MCF 10A (cell line): ENCODE measurements at regions of chr5 and their contacts with region 1.

Region 1: DNA sequence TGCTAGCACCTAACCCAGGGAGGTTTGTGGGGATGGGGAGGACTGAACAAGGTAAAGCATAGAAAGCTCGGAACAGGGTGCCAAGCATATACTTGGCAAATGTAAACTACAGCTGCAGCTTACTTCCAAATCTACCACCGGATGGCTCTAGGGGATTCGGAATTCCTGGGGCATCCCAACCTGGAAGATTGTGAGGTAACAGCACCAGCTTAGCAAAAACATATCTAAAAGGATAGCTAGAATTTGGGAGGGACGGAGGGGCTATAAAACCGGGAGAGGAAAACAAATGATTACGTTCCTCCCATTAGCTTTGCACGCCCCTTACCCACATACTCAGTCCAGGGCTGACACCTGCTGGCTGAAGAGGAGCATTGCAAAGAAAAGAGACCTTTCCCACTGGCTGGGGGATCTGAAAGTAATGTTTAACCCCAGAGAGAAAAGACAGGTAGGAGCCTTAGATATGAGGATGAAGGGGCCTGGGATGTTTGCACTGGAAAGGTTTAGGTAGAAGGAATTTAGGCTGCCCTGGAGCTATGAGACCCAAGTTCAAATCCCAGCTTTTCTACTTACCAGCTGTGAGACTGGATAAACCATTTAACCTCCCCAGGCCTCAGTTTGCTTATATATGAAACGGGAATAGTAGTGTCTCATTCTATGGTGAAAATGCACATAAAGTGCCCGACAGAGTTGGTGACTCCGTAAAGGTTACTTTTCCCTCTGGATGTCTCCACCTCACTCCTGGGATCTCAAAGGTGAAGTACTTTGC is 73.6 kb downstream of the FAM114A2 start:
- DNase-seq: peak; percentile 91
- H3K4me3 Mint-ChIP-seq: peak overlapping the region; percentile 32
- H3K27ac Mint-ChIP-seq: no peak overlapping the region
- H3K4me1 Mint-ChIP-seq: peaks cover 6% of the 10 kb centered on the region
- H3K27me3 Mint-ChIP-seq: no peaks in the 10 kb centered on the region
- CTCF ChIP-seq: peak; percentile 96

Region 2: GRCh38 chr5:152514827-152515397 is 1450.2 kb before region 1 on chr5:
- CTCF ChIA-PET with region 1: interaction called, 17 read pairs
- POLR2A ChIA-PET with region 1: no interaction called
- intact Hi-C with region 1: no loop called
- DNase-seq: peak; percentile 56
- H3K4me3 Mint-ChIP-seq: no peak overlapping the region
- H3K27ac Mint-ChIP-seq: no peak overlapping the region
- H3K4me1 Mint-ChIP-seq: no peaks in the 10 kb centered on the region
- H3K27me3 Mint-ChIP-seq: no peaks in the 10 kb centered on the region
- CTCF ChIP-seq: peak; percentile 36

Region 3: GRCh38 chr5:152542741-152543140 is 1422.3 kb before region 1 on chr5:
- CTCF ChIA-PET with region 1: interaction called, 54 read pairs
- POLR2A ChIA-PET with region 1: no interaction called
- intact Hi-C with region 1: no loop called
- DNase-seq: peak; percentile 73
- H3K4me3 Mint-ChIP-seq: no peak overlapping the region
- H3K27ac Mint-ChIP-seq: no peak overlapping the region
- H3K4me1 Mint-ChIP-seq: peaks cover 12% of the 10 kb centered on the region
- H3K27me3 Mint-ChIP-seq: no peaks in the 10 kb centered on the region
- CTCF ChIP-seq: no peak

Region 4: GRCh38 chr5:153445851-153446579 is 519.0 kb before region 1 on chr5:
- CTCF ChIA-PET with region 1: interaction called, 10 read pairs
- POLR2A ChIA-PET with region 1: no interaction called
- intact Hi-C with region 1: no loop called
- DNase-seq: peak; percentile 91
- H3K4me3 Mint-ChIP-seq: peak overlapping the region; percentile 5
- H3K27ac Mint-ChIP-seq: no peak overlapping the region
- H3K4me1 Mint-ChIP-seq: peaks cover 12% of the 10 kb centered on the region
- H3K27me3 Mint-ChIP-seq: no peaks in the 10 kb centered on the region
- CTCF ChIP-seq: no peak

Region 5: GRCh38 chr5:153490118-153491037 is 474.7 kb before region 1 on chr5 and contains the start of gene GRIA1:
- CTCF ChIA-PET with region 1: interaction called, 440 read pairs
- POLR2A ChIA-PET with region 1: no interaction called
- intact Hi-C with region 1: no loop called
- DNase-seq: no peak
- H3K4me3 Mint-ChIP-seq: no peak within 1 kb of the TSS
- H3K27ac Mint-ChIP-seq: no peak within 1 kb of the TSS
- H3K4me1 Mint-ChIP-seq: peaks cover 6% of the 10 kb centered on the region
- H3K27me3 Mint-ChIP-seq: no peaks in the 10 kb centered on the region
- CTCF ChIP-seq: no peak
- total RNA-seq, gene GRIA1: not detected in 2 replicates

Region 6: GRCh38 chr5:153530357-153531143 is 434.5 kb before region 1 on chr5:
- CTCF ChIA-PET with region 1: interaction called, 13 read pairs
- POLR2A ChIA-PET with region 1: no interaction called
- intact Hi-C with region 1: no loop called
- DNase-seq: no peak
- H3K4me3 Mint-ChIP-seq: no peak overlapping the region
- H3K27ac Mint-ChIP-seq: no peak overlapping the region
- H3K4me1 Mint-ChIP-seq: no peaks in the 10 kb centered on the region
- H3K27me3 Mint-ChIP-seq: no peaks in the 10 kb centered on the region
- CTCF ChIP-seq: no peak

Region 7: DNA sequence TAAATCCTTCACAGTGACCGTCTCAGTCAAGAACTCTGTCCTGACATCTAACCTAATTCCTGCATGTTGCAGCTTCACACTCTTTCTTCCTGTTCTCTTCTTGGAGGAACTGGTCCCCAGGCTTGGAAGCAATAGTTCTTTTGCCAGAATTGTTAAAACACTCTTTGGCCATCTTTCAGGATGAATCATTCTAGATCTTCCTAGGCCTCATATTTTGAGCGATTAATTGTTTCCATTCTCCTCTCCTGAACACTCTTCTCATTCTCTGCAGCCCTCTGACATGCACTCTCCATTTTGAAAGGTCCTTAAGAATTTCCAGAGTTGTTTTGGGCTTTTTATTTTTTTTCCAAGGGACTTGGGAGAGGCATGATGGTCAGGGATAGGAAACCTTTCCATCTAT is 12.2 kb before region 1 on chr5:
- CTCF ChIA-PET with region 1: interaction called, 93 read pairs
- POLR2A ChIA-PET with region 1: no interaction called
- intact Hi-C with region 1: no loop called
- DNase-seq: no peak
- H3K4me3 Mint-ChIP-seq: no peak overlapping the region
- H3K27ac Mint-ChIP-seq: no peak overlapping the region
- H3K4me1 Mint-ChIP-seq: no peaks in the 10 kb centered on the region
- H3K27me3 Mint-ChIP-seq: no peaks in the 10 kb centered on the region
- CTCF ChIP-seq: no peak